ENCODE measurements at regions of chr10 and their contacts with region 1.

Region 1: DNA sequence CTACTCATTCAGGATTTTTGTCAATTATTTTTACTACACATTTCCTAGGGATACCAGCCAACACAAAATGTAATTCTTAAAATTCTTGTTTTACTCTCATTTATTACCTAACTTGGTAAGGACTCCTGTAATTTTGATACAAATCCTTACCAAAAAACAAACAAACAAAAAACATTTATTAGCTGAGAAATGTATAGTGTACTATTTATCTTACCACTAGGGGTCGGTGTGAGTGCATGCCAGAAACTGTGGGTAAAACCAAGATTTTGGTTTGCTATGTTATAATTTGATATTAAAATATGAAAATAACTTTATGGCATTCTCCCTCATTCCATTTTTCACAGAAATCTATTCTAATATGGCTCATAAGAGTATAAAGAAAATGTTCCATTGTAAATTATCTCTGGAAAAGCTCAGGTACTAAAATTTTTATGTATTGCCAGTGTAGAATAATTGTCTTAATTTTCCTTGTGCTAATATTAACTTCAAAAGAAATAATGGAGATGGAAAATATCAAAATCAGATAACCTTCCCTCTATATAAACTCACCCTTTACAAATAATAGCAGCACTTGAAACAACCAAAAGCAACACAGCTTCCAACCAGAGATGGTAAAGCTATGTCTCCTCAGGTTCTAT is 290.8 kb upstream of the PCDH15 start:
- DNase-seq: no peak

Region 2: DNA sequence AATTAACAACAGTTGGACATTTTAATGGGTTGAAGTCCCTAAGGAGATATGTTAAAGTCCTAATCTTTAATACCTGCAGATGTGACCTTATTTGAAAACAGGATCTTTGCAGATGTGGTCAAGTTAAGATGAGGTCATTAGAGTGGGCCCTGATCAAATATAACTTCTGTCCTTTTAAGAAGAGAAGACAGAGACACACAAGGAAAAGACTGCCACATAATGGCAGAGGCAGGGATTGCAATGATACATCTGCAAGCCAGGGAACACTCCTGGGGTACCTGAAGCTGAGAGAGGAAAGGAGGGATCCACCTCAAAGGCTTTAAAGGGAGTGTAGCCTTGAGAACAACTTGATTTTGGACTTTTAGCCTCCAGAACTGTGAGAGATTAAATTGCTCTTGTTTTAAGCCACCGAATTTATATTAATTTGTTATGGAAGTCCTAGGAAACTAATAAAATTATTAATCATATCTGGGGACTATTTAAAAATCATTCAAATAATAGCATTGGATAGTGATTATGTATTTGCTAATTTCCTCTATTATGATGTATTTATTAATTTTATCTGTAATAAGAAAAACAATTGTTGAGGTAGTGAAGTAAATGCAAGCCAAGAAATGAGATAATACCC is 409.2 kb after region 1 on chr10:
- intact Hi-C with region 1: loop called (anchors 10 kb)
- DNase-seq: no peak

Region 3: DNA sequence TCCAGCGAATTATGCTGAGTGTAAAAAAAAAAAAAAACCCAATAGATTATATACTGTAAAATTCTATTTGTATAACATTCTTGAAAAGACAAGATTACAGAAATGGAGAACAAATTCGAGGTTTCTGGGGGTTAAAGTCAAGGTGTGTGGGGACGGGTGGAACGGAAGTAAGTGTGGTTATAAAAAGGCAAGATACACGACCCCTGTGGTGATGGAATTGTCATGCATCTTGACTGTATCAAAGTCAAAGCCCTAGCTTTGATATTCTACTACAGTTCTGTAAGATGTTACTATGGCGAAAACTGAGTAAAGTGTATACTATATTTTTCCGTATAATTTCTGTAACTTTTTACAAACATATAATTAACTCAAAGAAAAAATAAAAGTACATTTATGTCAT is 427.5 kb after region 1 on chr10:
- intact Hi-C with region 1: no loop called
- DNase-seq: no peak

Measured in cardiac septum (tissue), 1 donor.